Stomach (tissue), 19 donors: ENCODE measurements at regions of chr7 and their contacts with region 1.

Region 1: DNA sequence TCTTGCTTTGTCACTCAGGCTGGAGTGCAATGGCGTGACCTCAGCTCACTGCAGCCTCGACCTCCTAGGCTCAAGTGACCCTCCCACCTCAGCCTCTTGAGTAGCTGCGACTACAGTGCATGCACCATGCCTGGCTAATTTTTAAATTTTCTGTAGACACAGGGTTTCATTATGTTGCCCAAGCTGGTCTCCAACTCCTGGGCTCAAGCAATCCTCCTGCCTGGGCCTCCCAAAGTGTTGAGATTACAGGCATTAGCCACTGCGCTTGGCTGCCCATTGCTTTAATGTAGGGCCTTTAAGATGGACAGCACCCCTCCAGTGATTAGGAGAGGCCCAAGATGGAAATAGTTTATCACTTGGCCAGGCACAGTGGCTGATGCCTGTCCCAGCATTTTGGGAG is 39.4 kb downstream of the NIPSNAP2 start:
- DNase-seq: no peak
- H3K4me3 ChIP-seq: no peak overlapping the region
- H3K27ac ChIP-seq: no peak overlapping the region
- H3K4me1 ChIP-seq: peaks cover 0 to 18% (median 5%) of the 10 kb centered on the region in 4 donors
- H3K27me3 ChIP-seq: no peaks in the 10 kb centered on the region
- CTCF ChIP-seq: no peak
- EP300 ChIP-seq: no peak
- POLR2A ChIP-seq: no peak

Region 2: DNA sequence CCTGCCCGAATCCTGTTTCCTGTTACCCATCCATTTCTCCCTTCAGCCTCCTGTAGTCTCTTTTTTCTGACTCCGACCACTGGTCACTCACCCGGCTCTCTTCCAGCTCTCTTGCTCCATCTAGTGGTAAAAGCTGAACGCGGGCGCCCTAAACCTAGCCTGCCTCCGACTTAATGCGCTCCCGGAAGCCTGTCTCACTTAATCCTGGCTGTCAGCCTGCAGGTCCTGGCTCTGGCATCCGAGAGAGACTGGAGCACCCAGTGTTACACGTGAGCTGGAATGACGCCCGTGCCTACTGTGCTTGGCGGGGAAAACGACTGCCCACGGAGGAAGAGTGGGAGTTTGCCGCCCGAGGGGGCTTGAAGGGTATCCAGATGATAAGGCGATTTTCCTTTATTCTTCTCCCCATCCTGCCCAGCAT is 70.6 kb after region 1 on chr7:
- intact Hi-C with region 1: loop called (anchors 5 kb)
- DNase-seq: peak; percentile 93 to 97
- H3K4me3 ChIP-seq: no peak overlapping the region
- H3K27ac ChIP-seq: peak overlapping the region in 4 of 5 donors; percentile 41 to 77 (median 46)
- H3K4me1 ChIP-seq: peaks cover 13 to 20% (median 17%) of the 10 kb centered on the region in 4 donors
- H3K27me3 ChIP-seq: no peaks in the 10 kb centered on the region
- CTCF ChIP-seq: peak in 5 of 7 experiments; percentile 81 to 98 (median 93)
- EP300 ChIP-seq: no peak
- POLR2A ChIP-seq: no peak